ENCODE measurements at regions of chr16 and their contacts with region 1.

Region 1: GRCh38 chr16:66552286-66553177 is at the start of gene CKLF:
- DNase-seq: peak; percentile 93
- ATAC-seq: peak; percentile 80
- H3K4me3 Mint-ChIP-seq: peak within 1 kb of the TSS; percentile 90
- H3K27ac Mint-ChIP-seq: peak within 1 kb of the TSS; percentile 92
- H3K4me1 Mint-ChIP-seq: peaks cover 75% of the 10 kb centered on the region
- H3K27me3 Mint-ChIP-seq: no peaks in the 10 kb centered on the region
- total RNA-seq, gene CKLF: 137 to 139 TPM

Region 2: GRCh38 chr16:66511615-66512500 is 40.7 kb before region 1 on chr16:
- CTCF ChIA-PET with region 1: interaction called, 12 read pairs
- POLR2A ChIA-PET with region 1: interaction called, 30 read pairs
- DNase-seq: no peak
- ATAC-seq: no peak
- H3K4me3 Mint-ChIP-seq: no peak overlapping the region
- H3K27ac Mint-ChIP-seq: no peak overlapping the region
- H3K4me1 Mint-ChIP-seq: peaks cover 28% of the 10 kb centered on the region
- H3K27me3 Mint-ChIP-seq: no peaks in the 10 kb centered on the region

Region 3: GRCh38 chr16:66516808-66517585 is 35.5 kb before region 1 on chr16:
- CTCF ChIA-PET with region 1: interaction called, 63 read pairs
- POLR2A ChIA-PET with region 1: interaction called, 136 read pairs
- DNase-seq: peak; percentile 89
- ATAC-seq: peak; percentile 79
- H3K4me3 Mint-ChIP-seq: peak overlapping the region; percentile 74
- H3K27ac Mint-ChIP-seq: peak overlapping the region; percentile 94
- H3K4me1 Mint-ChIP-seq: peaks cover 74% of the 10 kb centered on the region
- H3K27me3 Mint-ChIP-seq: no peaks in the 10 kb centered on the region

Region 4: GRCh38 chr16:66521951-66522771 is 30.4 kb before region 1 on chr16:
- CTCF ChIA-PET with region 1: interaction called, 63 read pairs
- POLR2A ChIA-PET with region 1: interaction called, 136 read pairs
- DNase-seq: peak; percentile 96
- ATAC-seq: peak; percentile 85
- H3K4me3 Mint-ChIP-seq: peak overlapping the region; percentile 61
- H3K27ac Mint-ChIP-seq: peak overlapping the region; percentile 95
- H3K4me1 Mint-ChIP-seq: peaks cover 92% of the 10 kb centered on the region
- H3K27me3 Mint-ChIP-seq: no peaks in the 10 kb centered on the region

Region 5: DNA sequence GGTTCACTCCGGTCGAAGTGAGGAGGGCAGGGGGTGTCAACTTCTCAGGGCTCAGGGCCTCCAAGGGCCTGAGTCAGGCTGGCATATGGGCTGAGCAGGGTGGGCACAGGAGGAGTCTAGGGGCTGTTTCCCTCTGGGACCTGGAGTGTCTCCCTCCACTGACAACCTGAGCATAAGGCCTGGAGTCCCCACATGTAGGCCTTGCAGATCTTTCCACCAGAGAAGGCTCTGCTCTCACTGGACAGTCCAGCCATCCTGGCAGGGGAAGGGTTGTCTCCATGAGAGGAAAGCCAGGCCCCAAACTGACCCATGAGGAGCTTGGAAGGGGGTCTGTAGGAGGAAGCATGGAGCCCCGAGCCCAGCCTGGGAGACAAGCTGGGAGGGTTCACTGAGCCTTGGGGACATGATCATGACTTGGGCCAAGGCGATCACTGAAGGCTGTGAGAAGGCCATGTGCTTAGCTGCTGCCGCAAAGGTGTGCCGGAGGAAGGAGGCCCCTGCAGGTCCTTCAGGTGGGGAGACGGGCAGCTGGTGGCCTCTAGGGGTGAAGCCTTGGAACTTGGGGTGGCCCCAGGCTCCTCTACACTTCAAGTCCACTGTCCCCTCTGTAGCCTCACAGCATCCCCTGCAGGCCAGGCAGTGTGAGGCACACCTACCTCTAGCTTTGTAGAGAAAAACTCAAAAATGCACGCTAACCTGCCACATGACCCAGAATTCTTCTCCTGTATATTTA is 36.6 kb after region 1 on chr16:
- CTCF ChIA-PET with region 1: interaction called, 23 read pairs
- POLR2A ChIA-PET with region 1: interaction called, 16 read pairs
- DNase-seq: peak; percentile 83
- ATAC-seq: peak; percentile 88
- H3K4me3 Mint-ChIP-seq: peak overlapping the region; percentile 55
- H3K27ac Mint-ChIP-seq: peak overlapping the region; percentile 55
- H3K4me1 Mint-ChIP-seq: peaks cover 52% of the 10 kb centered on the region
- H3K27me3 Mint-ChIP-seq: no peaks in the 10 kb centered on the region

Measured in activated CD8-positive, alpha-beta T cell treated with anti-CD3 and anti-CD28 coated beads, Interleukin-2, amount 10 ng/mL, durations not matched to agents 7 days and 5 days (primary cell).